GM12878 (cell line): ENCODE measurements at regions of chr7 and their contacts with region 1.

Region 1: DNA sequence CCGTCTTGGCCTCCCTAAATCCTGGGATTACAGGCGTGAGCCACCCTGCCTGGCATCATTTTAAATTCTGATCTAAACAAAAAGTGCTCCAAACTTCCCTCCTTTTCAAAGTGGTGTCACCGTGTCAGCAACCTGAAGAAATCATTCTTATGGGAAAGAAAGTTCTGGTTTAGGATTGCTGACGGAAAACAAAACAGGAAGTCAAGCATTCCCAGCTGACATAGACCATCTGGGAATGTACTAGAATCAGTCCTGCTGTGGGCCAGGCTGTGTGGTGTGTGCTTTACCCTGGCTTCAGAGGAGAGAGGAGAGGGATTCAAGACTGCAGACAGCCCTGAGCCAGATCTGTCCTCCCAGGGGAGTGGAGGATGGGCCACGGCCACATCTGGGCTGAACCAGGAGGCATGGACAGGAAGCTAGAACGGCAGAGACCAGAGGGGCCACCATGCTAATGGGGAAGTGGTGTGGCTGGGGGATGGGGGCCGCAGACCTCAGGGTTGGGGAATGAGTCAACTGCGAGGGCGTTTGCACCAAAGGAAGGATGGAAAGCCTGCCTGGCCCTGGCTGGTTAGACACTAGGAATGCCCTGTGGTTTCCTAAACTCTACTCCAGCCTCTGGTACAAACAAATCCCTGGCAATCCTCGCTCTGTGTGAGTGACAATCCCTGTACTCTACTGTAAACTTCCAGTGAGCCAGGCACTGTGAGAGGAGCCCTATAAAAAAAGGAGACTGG is 16.7 kb upstream of the CLIP2 start:
- DNase-seq: peak; percentile 97
- ATAC-seq: peak; percentile 89
- H3K4me3 ChIP-seq: peak overlapping the region; percentile 19; the same call in 1 of the 2 replicates
- H3K27ac ChIP-seq: peak overlapping the region; percentile 98
- H3K4me1 ChIP-seq: peaks cover 65% of the 10 kb centered on the region
- H3K27me3 ChIP-seq: no peaks in the 10 kb centered on the region
- CTCF ChIP-seq: no peak
- EP300 ChIP-seq: peak; percentile 97 to 99
- POLR2A ChIP-seq: peak; percentile 76
- RAD21 ChIP-seq: 0 out of 2 replicates have a peak, but pooled peaks have one; percentile 32

Region 2: DNA sequence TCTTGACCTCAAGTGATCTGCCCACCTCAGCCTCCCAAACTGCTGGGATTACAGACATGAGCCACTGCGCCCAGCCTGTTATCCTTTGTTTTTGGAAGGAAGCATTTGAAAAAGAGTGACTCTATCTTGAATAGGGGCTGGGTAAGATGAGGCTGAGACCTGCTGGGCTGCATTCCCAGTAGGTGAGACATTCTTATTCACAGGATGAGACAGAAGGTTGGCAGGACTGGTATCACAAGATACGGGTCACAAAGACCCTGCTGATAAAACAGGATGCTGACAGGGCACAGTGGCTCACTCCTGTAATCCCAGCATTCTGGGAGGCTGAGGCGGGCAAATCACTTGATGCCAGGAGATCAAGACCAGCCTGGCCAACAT is 138.8 kb before region 1 on chr7:
- CTCF ChIA-PET with region 1: no interaction called
- POLR2A ChIA-PET with region 1: no interaction called
- RAD21 ChIA-PET with region 1: no interaction called
- SMC1A ChIA-PET with region 1: no interaction called
- in situ Hi-C with region 1: no loop called
- intact Hi-C with region 1: no loop called
- DNase-seq: no peak
- ATAC-seq: no peak
- H3K4me3 ChIP-seq: no peak overlapping the region
- H3K27ac ChIP-seq: no peak overlapping the region
- H3K4me1 ChIP-seq: no peaks in the 10 kb centered on the region
- H3K27me3 ChIP-seq: no peaks in the 10 kb centered on the region
- CTCF ChIP-seq: no peak
- EP300 ChIP-seq: no peak
- POLR2A ChIP-seq: no peak
- RAD21 ChIP-seq: no peak

Region 3: DNA sequence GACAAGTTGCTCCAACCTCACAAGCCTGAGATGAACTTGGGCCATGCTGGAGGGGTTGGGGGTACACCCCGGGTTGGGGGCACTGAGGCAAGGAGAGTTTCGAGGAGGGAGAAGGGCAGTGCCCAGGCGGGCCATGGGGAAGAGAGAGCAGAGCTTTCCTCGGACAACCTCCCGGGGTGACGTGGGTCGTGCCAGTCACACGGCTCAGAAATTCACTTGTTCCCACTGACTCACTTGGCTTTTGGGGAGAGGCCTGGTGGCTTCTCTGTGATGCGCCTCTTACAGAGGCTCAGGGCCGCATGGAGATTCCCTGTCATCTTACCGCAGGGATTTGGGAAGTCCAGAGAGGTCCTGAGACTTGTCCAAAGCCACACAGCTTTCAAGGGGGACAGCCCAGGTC is 59.8 kb before region 1 on chr7:
- CTCF ChIA-PET with region 1: interaction called, 29 read pairs
- POLR2A ChIA-PET with region 1: interaction called, 39 read pairs
- RAD21 ChIA-PET with region 1: interaction called, 26 read pairs
- SMC1A ChIA-PET with region 1: interaction called, 10 read pairs
- in situ Hi-C with region 1: no loop called
- intact Hi-C with region 1: loop called (anchors 2 kb)
- DNase-seq: no peak
- ATAC-seq: no peak
- H3K4me3 ChIP-seq: peak overlapping the region; percentile 96
- H3K27ac ChIP-seq: peak overlapping the region; percentile 94
- H3K4me1 ChIP-seq: peaks cover 38% of the 10 kb centered on the region
- H3K27me3 ChIP-seq: no peaks in the 10 kb centered on the region
- CTCF ChIP-seq: no peak
- EP300 ChIP-seq: no peak
- POLR2A ChIP-seq: peak; percentile 49; the same call in 1 of the 2 replicates
- RAD21 ChIP-seq: no peak

Region 4: DNA sequence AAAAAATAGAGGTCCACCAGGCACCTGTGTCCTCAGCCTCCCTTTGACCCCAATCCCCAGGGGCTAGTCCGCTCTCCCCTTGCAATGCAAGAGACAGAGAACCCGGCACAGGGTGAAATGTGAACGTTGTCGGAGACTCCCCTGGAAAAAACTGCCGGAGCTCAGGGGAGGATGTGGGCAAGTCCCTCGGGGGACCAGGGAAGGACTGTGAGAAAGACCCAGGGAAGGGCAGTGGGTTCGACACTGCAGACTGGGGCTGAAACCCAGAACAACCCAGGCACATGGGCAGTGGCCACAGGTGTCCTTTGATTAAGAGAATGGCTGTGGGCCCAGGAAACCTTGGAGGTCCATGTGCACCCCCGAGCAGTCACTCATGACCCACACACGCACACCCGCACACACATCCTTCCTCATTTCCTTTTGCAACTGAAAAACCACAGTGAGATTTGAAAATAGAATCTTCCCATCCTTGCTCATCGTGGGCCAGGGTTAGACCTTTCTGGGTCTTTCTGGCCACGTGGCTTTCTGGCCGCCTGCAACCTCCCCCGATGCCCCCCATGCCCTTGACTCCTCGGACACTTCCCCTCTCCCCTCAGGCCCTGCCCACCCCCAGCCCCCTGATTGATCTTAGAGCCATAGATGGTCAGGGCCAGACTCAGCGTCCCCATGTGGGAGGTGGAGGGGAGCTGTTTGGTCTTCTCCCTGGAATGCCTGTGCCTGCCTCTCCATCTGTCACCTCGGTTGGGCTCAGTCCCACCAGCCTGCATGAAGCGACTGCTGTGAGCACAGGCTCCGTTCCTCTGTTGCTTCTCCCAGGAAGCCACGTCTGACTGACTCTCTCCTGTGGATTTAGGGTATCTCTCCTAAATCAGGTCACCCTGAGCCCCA is 54.8 kb before region 1 on chr7:
- CTCF ChIA-PET with region 1: interaction called, 9 read pairs
- POLR2A ChIA-PET with region 1: interaction called, 39 read pairs
- RAD21 ChIA-PET with region 1: interaction called, 7 read pairs
- SMC1A ChIA-PET with region 1: interaction called, 5 read pairs
- in situ Hi-C with region 1: no loop called
- intact Hi-C with region 1: loop called (anchors 2 kb)
- DNase-seq: peak; percentile 81
- ATAC-seq: peak; percentile 63
- H3K4me3 ChIP-seq: no peak overlapping the region
- H3K27ac ChIP-seq: peak overlapping the region; percentile 95
- H3K4me1 ChIP-seq: peaks cover 42% of the 10 kb centered on the region
- H3K27me3 ChIP-seq: no peaks in the 10 kb centered on the region
- CTCF ChIP-seq: no peak
- EP300 ChIP-seq: peak; percentile 51 to 82; a peak in 3 of 4 replicates
- POLR2A ChIP-seq: peak; percentile 58
- RAD21 ChIP-seq: no peak

Region 5: GRCh38 chr7:74254129-74254857 is 18.2 kb before region 1 on chr7 and contains the start of gene RFC2:
- CTCF ChIA-PET with region 1: interaction called, 8 read pairs
- POLR2A ChIA-PET with region 1: interaction called, 17 read pairs
- RAD21 ChIA-PET with region 1: interaction called, 20 read pairs
- SMC1A ChIA-PET with region 1: interaction called, 41 read pairs
- in situ Hi-C with region 1: no loop called
- intact Hi-C with region 1: loop called (anchors 1 kb)
- DNase-seq: peak; percentile 96
- ATAC-seq: peak; percentile 94
- H3K4me3 ChIP-seq: peak within 1 kb of the TSS; percentile 86
- H3K27ac ChIP-seq: peak within 1 kb of the TSS; percentile 88
- H3K4me1 ChIP-seq: peaks cover 33% of the 10 kb centered on the region
- H3K27me3 ChIP-seq: no peaks in the 10 kb centered on the region
- CTCF ChIP-seq: peak in 1 of 3 experiments; percentile 17; a peak in 1 of 6 replicates
- EP300 ChIP-seq: peak; percentile 19 to 45; a peak in 2 of 4 replicates
- POLR2A ChIP-seq: peak; percentile 96
- RAD21 ChIP-seq: no peak
- polyA plus RNA-seq, gene RFC2: 25.8 to 45.2 TPM

Region 6: GRCh38 chr7:74289018-74289658 is 16.7 kb after region 1 on chr7 and contains the start of gene CLIP2:
- CTCF ChIA-PET with region 1: interaction called, 103 read pairs
- POLR2A ChIA-PET with region 1: interaction called, 171 read pairs
- RAD21 ChIA-PET with region 1: interaction called, 169 read pairs
- SMC1A ChIA-PET with region 1: interaction called, 285 read pairs
- in situ Hi-C with region 1: no loop called
- intact Hi-C with region 1: loop called (anchors 1 kb)
- DNase-seq: no peak
- ATAC-seq: peak; percentile 49
- H3K4me3 ChIP-seq: peak within 1 kb of the TSS; percentile 97
- H3K27ac ChIP-seq: peak within 1 kb of the TSS; percentile 93
- H3K4me1 ChIP-seq: peaks cover 44% of the 10 kb centered on the region
- H3K27me3 ChIP-seq: no peaks in the 10 kb centered on the region
- CTCF ChIP-seq: no peak
- EP300 ChIP-seq: no peak
- POLR2A ChIP-seq: peak; percentile 75
- RAD21 ChIP-seq: 0 out of 2 replicates have a peak, but pooled peaks have one; percentile 5
- polyA plus RNA-seq, gene CLIP2: 0.26 to 0.82 TPM

Region 7: DNA sequence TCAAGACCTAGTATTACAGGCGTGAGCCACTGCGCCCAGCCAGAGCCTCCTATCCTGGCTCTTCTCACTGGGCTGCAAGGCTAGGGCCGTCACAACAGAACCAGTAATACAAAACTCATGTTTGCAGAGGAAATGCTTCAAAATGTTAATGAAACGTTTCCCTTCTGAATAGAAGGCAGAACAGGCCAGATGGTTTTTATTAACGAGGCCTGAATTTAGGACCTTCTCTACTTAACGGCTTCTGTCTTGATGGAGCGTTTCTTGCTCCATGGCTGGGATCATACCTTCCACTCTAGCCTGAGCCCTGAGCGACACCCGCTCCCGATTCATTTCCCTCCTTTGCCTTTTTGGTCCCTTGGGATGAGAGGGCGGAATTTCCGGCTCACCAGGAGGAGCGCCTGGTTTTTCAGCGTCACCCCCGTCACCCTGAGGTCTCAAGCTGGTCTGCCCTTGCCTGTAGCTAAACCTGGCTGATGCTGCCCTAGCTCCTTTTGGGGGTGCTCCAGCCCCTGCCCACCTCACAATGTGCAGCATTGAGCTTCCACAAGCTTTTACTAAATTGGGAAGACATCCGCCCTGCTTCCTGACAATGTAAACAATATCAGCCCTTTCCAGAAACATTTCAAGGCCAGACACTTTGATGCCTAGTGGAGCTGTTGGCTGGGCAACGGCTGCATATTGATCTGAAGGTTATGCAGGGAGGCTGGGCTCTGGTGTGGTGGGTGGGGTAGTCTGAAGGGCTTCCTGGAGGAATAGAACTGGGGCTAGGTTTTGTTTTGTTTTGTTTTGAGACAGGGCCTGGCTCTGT is 21.9 kb after region 1 on chr7:
- CTCF ChIA-PET with region 1: interaction called, 20 read pairs
- POLR2A ChIA-PET with region 1: interaction called, 171 read pairs
- RAD21 ChIA-PET with region 1: interaction called, 169 read pairs
- SMC1A ChIA-PET with region 1: interaction called, 285 read pairs
- in situ Hi-C with region 1: no loop called
- intact Hi-C with region 1: loop called (anchors 2 kb)
- DNase-seq: no peak
- ATAC-seq: no peak
- H3K4me3 ChIP-seq: peak overlapping the region; percentile 97; the same call in 1 of the 2 replicates
- H3K27ac ChIP-seq: no peak overlapping the region; the same call in 1 of the 2 replicates
- H3K4me1 ChIP-seq: peaks cover 23% of the 10 kb centered on the region
- H3K27me3 ChIP-seq: no peaks in the 10 kb centered on the region
- CTCF ChIP-seq: no peak
- EP300 ChIP-seq: no peak
- POLR2A ChIP-seq: no peak
- RAD21 ChIP-seq: no peak

Region 8: GRCh38 chr7:74317146-74317782 is 44.8 kb after region 1 on chr7:
- CTCF ChIA-PET with region 1: interaction called, 6 read pairs
- POLR2A ChIA-PET with region 1: no interaction called
- RAD21 ChIA-PET with region 1: interaction called, 3 read pairs
- SMC1A ChIA-PET with region 1: no interaction called
- in situ Hi-C with region 1: no loop called
- intact Hi-C with region 1: loop called (anchors 5 kb)
- DNase-seq: no peak
- ATAC-seq: no peak
- H3K4me3 ChIP-seq: no peak overlapping the region
- H3K27ac ChIP-seq: no peak overlapping the region; the same call in 1 of the 2 replicates
- H3K4me1 ChIP-seq: peaks cover 37% of the 10 kb centered on the region
- H3K27me3 ChIP-seq: no peaks in the 10 kb centered on the region
- CTCF ChIP-seq: no peak
- EP300 ChIP-seq: no peak
- POLR2A ChIP-seq: no peak
- RAD21 ChIP-seq: no peak

Region 9: DNA sequence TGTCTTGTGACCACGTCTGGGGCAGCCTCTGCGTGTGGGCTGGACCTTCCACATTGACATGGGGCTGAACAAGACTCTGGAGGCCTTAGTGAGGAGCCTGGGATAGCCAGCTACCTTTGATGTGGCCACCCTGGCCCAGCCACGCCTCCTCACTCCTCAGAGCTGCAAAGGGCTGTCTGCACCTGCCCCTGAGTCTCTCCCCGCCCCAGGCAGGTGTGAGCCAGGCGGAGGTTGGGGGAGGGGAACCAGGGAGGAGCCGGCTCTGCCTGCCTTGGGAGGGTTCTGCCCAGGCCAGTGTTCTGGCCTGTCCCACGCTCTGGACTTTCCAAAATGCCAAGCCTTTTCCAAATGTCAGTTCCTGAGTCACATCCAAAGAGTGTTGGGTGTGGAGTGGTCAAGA is 253.4 kb after region 1 on chr7:
- CTCF ChIA-PET with region 1: no interaction called
- POLR2A ChIA-PET with region 1: no interaction called
- RAD21 ChIA-PET with region 1: no interaction called
- SMC1A ChIA-PET with region 1: no interaction called
- in situ Hi-C with region 1: no loop called
- intact Hi-C with region 1: no loop called
- DNase-seq: no peak
- ATAC-seq: 0 out of 3 replicates have a peak, but pooled peaks have one; percentile 27
- H3K4me3 ChIP-seq: no peak overlapping the region
- H3K27ac ChIP-seq: no peak overlapping the region
- H3K4me1 ChIP-seq: no peaks in the 10 kb centered on the region
- H3K27me3 ChIP-seq: no peaks in the 10 kb centered on the region
- CTCF ChIP-seq: no peak
- EP300 ChIP-seq: no peak
- POLR2A ChIP-seq: no peak
- RAD21 ChIP-seq: no peak